ENCODE measurements at regions of chr5 and their contacts with region 1.

Region 1: GRCh38 chr5:91098541-91098940 is 284.6 kb downstream of the ARRDC3 start:
- DNase-seq: no peak
- ATAC-seq: no peak
- H3K4me3 ChIP-seq: no peak overlapping the region
- H3K27ac ChIP-seq: no peak overlapping the region
- H3K4me1 ChIP-seq: peaks cover 0 to 2% (median 0%) of the 10 kb centered on the region in 4 donors
- H3K27me3 ChIP-seq: no peaks in the 10 kb centered on the region
- CTCF ChIP-seq: no peak
- POLR2A ChIP-seq: no peak

Region 2: GRCh38 chr5:89936576-89936975 is 1162.0 kb before region 1 on chr5:
- intact Hi-C with region 1: no loop called
- DNase-seq: no peak
- ATAC-seq: no peak
- H3K4me3 ChIP-seq: no peak overlapping the region
- H3K27ac ChIP-seq: no peak overlapping the region
- H3K4me1 ChIP-seq: no peaks in the 10 kb centered on the region
- H3K27me3 ChIP-seq: no peaks in the 10 kb centered on the region
- CTCF ChIP-seq: no peak
- POLR2A ChIP-seq: no peak

Region 3: DNA sequence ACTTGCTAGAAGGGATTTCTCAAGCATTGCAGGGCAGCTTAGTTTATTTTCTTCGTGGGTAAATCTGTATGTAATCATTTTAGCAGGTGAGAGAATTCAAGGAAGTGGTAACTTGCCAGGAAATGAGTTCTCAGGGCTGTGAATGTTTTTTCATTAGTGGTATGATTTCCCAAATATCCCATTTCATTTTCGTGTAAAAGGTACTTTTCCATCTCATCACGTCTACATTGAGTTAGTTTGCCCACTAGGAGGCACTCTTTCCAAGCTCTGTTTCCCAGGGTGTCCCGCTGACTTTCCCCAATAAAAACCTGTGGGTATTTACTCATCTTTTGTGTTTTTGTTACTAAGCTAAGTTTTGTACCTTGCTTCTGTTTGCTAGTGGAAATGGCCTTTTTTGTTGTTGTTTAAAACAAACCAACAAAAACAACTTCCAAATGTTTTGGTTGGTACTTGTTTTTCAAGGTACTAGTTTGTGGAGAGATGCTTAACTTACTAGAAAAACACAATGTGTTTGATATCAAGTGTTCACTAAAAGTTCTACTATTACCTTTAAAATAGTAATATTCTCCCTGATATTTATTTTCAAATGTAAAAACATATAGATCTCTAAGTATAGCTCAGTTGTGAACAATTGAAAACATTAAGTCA is 166.4 kb before region 1 on chr5:
- intact Hi-C with region 1: loop called in 1 of 2 experiments (anchors 10 kb)
- DNase-seq: peak in 2 of 3 donors; percentile 17 to 72
- ATAC-seq: peak; percentile 91 to 94 (median 93)
- H3K4me3 ChIP-seq: no peak overlapping the region
- H3K27ac ChIP-seq: peak overlapping the region; percentile 52 to 62 (median 59)
- H3K4me1 ChIP-seq: peaks cover 0 to 15% (median 1%) of the 10 kb centered on the region in 4 donors
- H3K27me3 ChIP-seq: no peaks in the 10 kb centered on the region
- CTCF ChIP-seq: peak; percentile 85 to 87 (median 86)
- POLR2A ChIP-seq: no peak